CD8-positive, alpha-beta memory T cell (primary cell): ENCODE measurements at regions of chr1 and their contacts with region 1.

Region 1: GRCh38 chr1:41919764-41920397 is 1.2 kb upstream of the HIVEP3 start:
- DNase-seq: peak; percentile 58 to 90 (median 78)
- H3K4me3 ChIP-seq: peak overlapping the region; percentile 72
- H3K4me3 Mint-ChIP-seq: peak overlapping the region; percentile 87 to 99 (median 94)
- H3K27ac ChIP-seq: peak overlapping the region; percentile 57
- H3K27ac Mint-ChIP-seq: peak overlapping the region; percentile 88 to 99 (median 96)
- H3K4me1 ChIP-seq: peaks cover 48% of the 10 kb centered on the region
- H3K4me1 Mint-ChIP-seq: peaks cover 55 to 62% (median 59%) of the 10 kb centered on the region in 3 donors
- H3K27me3 ChIP-seq: no peaks in the 10 kb centered on the region
- H3K27me3 Mint-ChIP-seq: peaks cover 0 to 6% of the 10 kb centered on the region in 2 donors

Region 2: GRCh38 chr1:41891199-41891896 is 28.5 kb before region 1 on chr1:
- CTCF ChIA-PET with region 1: interaction called, 79 read pairs
- POLR2A ChIA-PET with region 1: interaction called, 72 read pairs
- DNase-seq: peak; percentile 20 to 77 (median 68)
- H3K4me3 ChIP-seq: peak overlapping the region; percentile 40
- H3K4me3 Mint-ChIP-seq: peak overlapping the region; percentile 81 to 94 (median 84)
- H3K27ac ChIP-seq: peak overlapping the region; percentile 62
- H3K27ac Mint-ChIP-seq: peak overlapping the region; percentile 86 to 99 (median 96)
- H3K4me1 ChIP-seq: peaks cover 53% of the 10 kb centered on the region
- H3K4me1 Mint-ChIP-seq: peaks cover 46 to 79% (median 58%) of the 10 kb centered on the region in 3 donors
- H3K27me3 ChIP-seq: no peaks in the 10 kb centered on the region
- H3K27me3 Mint-ChIP-seq: no peaks in the 10 kb centered on the region

Region 3: DNA sequence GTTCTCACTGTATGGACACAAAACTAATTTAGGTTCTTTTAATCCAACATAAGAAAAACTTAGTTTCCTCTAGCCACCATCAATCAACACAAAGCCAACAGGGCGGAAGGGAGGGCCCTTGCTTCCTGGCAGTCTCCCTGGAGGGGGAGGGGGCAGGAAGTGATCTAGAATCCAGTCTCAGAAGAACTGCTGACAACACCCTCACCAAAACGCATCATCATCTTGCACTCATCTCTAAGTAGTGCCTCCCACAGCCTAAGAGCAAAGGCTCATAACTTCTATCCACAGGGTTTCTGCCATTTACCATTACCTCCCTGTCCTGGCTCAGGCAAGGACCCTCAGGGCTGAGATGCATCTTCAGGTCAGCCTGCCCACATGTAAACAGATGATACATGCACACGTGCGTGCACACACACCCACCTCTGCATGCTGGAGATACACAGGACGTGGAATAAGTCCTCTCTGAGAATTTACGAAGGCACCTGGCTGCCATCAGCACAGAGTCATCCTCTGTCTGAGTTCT is 21.6 kb before region 1 on chr1:
- CTCF ChIA-PET with region 1: interaction called, 79 read pairs
- POLR2A ChIA-PET with region 1: interaction called, 72 read pairs
- DNase-seq: peak; percentile 42 to 89 (median 66)
- H3K4me3 ChIP-seq: peak overlapping the region; percentile 35
- H3K4me3 Mint-ChIP-seq: peak overlapping the region; percentile 5 to 81 (median 72)
- H3K27ac ChIP-seq: peak overlapping the region; percentile 45
- H3K27ac Mint-ChIP-seq: peak overlapping the region; percentile 91 to 98 (median 94)
- H3K4me1 ChIP-seq: peaks cover 84% of the 10 kb centered on the region
- H3K4me1 Mint-ChIP-seq: peaks cover 79 to 95% (median 83%) of the 10 kb centered on the region in 3 donors
- H3K27me3 ChIP-seq: no peaks in the 10 kb centered on the region
- H3K27me3 Mint-ChIP-seq: peaks cover 0 to 2% of the 10 kb centered on the region in 2 donors